ENCODE measurements at regions of chr1 and their contacts with region 1.

Region 1: DNA sequence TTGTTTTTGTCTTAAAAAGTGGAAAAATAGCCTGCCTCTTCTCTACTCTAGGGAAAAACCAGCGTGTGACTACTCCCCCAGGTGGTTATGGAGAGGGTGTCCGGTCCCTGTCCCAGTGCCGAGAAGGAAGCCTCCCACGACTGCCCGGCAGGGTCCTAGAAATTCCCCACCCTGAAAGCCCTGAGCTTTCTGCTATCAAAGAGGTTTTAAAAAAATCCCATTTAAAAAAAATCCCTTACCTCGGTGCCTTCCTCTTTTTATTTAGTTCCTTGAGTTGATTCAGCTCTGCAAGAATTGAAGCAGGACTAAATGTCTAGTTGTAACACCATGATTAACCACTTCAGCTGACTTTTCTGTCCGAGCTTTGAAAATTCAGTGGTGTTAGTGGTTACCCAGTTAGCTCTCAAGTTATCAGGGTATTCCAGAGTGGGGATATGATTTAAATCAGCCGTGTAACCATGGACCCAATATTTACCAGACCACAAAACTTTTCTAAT is 35.0 kb upstream of the TDRD10 start:
- DNase-seq: no peak
- H3K4me3 ChIP-seq: no peak overlapping the region
- H3K27ac ChIP-seq: peak overlapping the region; percentile 84 to 89 (median 87)
- H3K4me1 ChIP-seq: peaks cover 20 to 83% (median 80%) of the 10 kb centered on the region in 4 donors
- H3K27me3 ChIP-seq: no peaks in the 10 kb centered on the region
- CTCF ChIP-seq: peak; percentile 48 to 57 (median 55)
- EP300 ChIP-seq: no peak
- POLR2A ChIP-seq: no peak

Region 2: GRCh38 chr1:154324669-154325582 is 142.0 kb before region 1 on chr1 and contains the start of gene ATP8B2:
- intact Hi-C with region 1: loop called (anchors 5 kb)
- DNase-seq: peak; percentile 95
- H3K4me3 ChIP-seq: peak within 1 kb of the TSS; percentile 88 to 99 (median 96)
- H3K27ac ChIP-seq: peak within 1 kb of the TSS; percentile 99 to 100 (median 99)
- H3K4me1 ChIP-seq: peaks cover 34 to 52% (median 50%) of the 10 kb centered on the region in 4 donors
- H3K27me3 ChIP-seq: no peaks in the 10 kb centered on the region
- CTCF ChIP-seq: peak; percentile 91 to 98 (median 96)
- EP300 ChIP-seq: no peak
- POLR2A ChIP-seq: no peak
- total RNA-seq, gene ATP8B2: 108 to 178 (median 128) TPM

Region 3: DNA sequence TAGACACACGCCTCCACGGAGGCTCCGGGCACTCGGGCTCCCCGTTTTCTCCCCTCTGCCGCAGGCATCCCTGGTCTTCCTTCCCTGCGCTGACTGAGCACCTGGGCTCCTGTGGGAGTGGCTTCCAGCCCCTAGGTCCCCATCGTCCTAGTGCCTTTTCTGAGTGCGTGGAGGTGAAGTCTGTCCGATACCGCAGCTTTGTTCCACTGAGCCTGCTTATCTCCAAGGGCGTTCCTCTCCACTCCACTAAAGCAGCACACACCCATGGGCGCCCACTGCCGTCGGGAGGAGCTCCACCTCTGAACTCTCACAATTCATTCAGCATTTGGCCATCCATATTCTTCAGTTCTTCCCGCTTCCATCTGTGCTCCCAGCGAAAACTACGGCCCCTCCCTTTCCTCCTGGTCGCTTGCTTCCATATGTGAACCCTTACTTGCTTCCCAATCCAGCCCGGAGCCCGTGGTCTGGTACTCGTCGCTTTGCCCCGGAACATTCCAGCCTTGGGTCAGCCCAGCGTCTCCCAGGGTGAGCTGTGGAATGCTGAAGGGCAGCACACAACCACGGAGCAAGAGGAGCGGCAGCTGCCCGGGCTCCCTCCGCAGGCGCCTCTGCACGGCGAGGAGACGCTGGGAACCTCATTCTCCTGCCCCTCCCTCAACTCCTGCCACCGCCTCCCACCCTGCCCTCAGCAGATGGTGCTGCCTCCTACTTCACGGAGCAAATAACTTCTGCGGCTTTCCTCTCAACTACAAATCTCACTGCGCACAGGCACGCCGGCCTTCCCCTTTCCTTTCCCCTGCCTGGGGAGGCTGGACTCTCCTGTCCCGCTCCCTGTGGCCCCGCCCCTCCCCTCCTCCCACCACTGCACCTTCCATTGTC is 114.1 kb before region 1 on chr1:
- intact Hi-C with region 1: loop called (anchors 5 kb)
- DNase-seq: no peak
- H3K4me3 ChIP-seq: peak overlapping the region; percentile 47 to 56 (median 50)
- H3K27ac ChIP-seq: peak overlapping the region; percentile 73 to 78 (median 75)
- H3K4me1 ChIP-seq: peaks cover 19 to 39% (median 31%) of the 10 kb centered on the region in 4 donors
- H3K27me3 ChIP-seq: no peaks in the 10 kb centered on the region
- CTCF ChIP-seq: peak in 1 of 3 experiments; percentile 2
- EP300 ChIP-seq: no peak
- POLR2A ChIP-seq: no peak

Region 4: DNA sequence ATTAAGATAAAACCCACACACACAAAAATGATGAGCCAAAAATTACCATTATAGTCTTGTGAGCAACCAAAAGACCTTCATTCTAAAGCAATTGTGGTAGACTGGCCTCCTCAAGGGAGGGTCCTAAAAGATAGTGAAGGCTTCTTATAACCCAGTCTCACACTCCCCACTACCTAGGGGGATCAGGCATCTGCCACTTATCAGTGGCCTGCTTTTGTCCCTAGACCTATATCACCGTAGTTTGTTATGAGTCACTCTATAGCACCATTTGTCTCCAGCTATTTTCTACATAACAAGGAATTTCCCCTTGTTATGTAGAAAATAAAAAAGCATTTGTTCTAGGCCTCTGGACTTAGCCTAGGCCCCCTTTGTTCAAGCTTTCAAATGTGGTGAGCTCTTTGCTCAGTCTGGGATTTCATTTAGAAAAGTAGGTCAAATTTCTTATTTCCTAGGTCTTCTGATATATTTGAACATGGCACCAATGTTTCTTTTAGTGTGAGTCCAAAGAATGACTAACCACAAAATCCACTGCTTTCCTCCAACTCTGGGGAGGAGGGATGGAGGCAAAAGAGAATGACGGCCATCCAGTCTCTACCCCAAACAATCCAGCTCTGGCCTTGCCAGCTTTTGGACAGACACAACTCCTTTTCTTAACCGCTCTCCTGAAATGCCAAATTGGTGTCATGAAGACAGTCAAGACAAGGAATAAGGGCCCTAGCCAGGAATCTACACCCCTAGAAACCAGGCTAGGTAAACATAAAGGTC is 132.1 kb after region 1 on chr1:
- intact Hi-C with region 1: no loop called
- DNase-seq: no peak
- H3K4me3 ChIP-seq: no peak overlapping the region
- H3K27ac ChIP-seq: peak overlapping the region in 3 of 4 donors; percentile 0 to 33 (median 23)
- H3K4me1 ChIP-seq: peaks cover 39 to 58% (median 50%) of the 10 kb centered on the region in 4 donors
- H3K27me3 ChIP-seq: no peaks in the 10 kb centered on the region
- CTCF ChIP-seq: no peak
- EP300 ChIP-seq: no peak
- POLR2A ChIP-seq: no peak

Region 5: GRCh38 chr1:156435545-156436141 is 1968.7 kb after region 1 on chr1:
- intact Hi-C with region 1: no loop called
- DNase-seq: no peak
- H3K4me3 ChIP-seq: peak overlapping the region; percentile 41 to 59 (median 46)
- H3K27ac ChIP-seq: no peak overlapping the region
- H3K4me1 ChIP-seq: peaks cover 16 to 23% (median 20%) of the 10 kb centered on the region in 4 donors
- H3K27me3 ChIP-seq: peaks cover 15 to 100% (median 81%) of the 10 kb centered on the region in 4 donors
- CTCF ChIP-seq: no peak
- EP300 ChIP-seq: no peak
- POLR2A ChIP-seq: no peak